HAP-1 (cell line): ENCODE measurements at regions of chr2 and their contacts with region 1.

Region 1: GRCh38 chr2:217713395-217714286 is 289.2 kb downstream of the TNS1 start:
- DNase-seq: peak; percentile 67 to 89
- H3K4me3 ChIP-seq: no peak overlapping the region
- H3K4me1 ChIP-seq: no peaks in the 10 kb centered on the region
- H3K27me3 ChIP-seq: no peaks in the 10 kb centered on the region

Region 2: DNA sequence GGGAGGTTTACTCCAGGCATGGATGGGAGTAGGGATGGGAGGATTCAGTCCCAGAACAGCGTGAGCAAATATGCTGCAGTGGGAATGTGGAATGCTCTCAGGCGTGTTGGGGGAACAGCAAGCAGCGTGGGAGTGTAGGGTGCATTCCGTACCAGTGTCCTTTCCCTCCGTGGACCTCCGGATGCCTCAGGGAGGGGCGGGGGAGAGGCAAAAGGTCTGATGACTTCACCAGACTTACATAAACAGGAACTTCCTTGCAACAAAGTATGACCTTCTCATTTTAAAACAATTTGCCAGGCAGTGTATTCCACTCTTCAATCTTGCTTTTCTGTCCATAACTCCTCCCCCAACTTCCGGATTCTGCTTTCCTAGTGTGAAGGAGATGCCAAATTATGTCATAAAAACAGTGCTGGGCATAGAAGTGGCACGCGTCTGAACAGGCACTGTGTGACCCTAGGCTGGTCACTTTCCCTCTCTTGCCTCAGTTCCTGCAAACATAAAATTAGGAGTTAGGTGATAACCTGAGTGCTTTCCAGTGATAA is 1178.1 kb before region 1 on chr2:
- in situ Hi-C with region 1: loop called (anchors 25 kb)
- DNase-seq: no peak
- H3K4me3 ChIP-seq: no peak overlapping the region
- H3K4me1 ChIP-seq: no peaks in the 10 kb centered on the region
- H3K27me3 ChIP-seq: no peaks in the 10 kb centered on the region

Region 3: DNA sequence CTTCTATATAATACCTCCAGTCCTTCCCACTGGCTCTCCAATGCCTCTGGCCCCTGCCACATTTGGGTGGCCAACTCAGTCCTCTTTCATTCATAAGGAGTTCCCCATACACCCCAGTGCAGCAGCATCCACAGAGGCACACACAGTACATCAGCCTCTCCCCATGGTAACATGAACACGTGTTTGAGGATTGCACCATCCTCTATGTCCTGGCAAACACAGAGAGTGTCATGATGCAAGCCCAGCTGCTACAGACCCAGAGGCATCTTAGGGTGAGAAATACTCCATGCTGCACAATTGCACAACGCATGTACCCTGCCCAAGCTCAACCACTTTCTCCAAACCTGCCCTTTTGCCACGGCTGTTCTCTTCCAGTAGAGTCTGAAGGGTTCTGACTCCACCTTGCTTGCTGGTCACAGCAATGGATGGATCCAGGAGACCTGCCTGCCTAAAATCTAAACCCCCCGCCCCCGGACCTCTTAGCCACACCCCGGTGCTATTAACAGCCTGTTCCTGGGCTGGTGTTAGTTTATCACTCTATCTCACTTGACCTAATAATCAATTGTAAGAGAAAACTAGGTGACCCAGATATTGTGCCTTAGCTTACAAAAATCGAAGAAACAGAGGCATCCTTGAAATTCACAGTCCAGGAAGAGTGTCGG is 1029.7 kb before region 1 on chr2:
- in situ Hi-C with region 1: loop called (anchors 5 kb)
- DNase-seq: no peak
- H3K4me3 ChIP-seq: no peak overlapping the region
- H3K4me1 ChIP-seq: no peaks in the 10 kb centered on the region
- H3K27me3 ChIP-seq: no peaks in the 10 kb centered on the region

Region 4: GRCh38 chr2:217510771-217511291 is 202.8 kb before region 1 on chr2:
- in situ Hi-C with region 1: loop called (anchors 10 kb)
- DNase-seq: peak; percentile 81 to 88
- H3K4me3 ChIP-seq: no peak overlapping the region
- H3K4me1 ChIP-seq: peaks cover 5% of the 10 kb centered on the region; the same call in 1 of the 2 replicates
- H3K27me3 ChIP-seq: no peaks in the 10 kb centered on the region

Region 5: GRCh38 chr2:217988014-217988839 is 274.6 kb after region 1 on chr2:
- in situ Hi-C with region 1: no loop called
- DNase-seq: peak; percentile 40 to 88
- H3K4me3 ChIP-seq: no peak overlapping the region
- H3K4me1 ChIP-seq: no peaks in the 10 kb centered on the region
- H3K27me3 ChIP-seq: no peaks in the 10 kb centered on the region